ENCODE measurements at regions of chr1 and their contacts with region 1.

Region 1: DNA sequence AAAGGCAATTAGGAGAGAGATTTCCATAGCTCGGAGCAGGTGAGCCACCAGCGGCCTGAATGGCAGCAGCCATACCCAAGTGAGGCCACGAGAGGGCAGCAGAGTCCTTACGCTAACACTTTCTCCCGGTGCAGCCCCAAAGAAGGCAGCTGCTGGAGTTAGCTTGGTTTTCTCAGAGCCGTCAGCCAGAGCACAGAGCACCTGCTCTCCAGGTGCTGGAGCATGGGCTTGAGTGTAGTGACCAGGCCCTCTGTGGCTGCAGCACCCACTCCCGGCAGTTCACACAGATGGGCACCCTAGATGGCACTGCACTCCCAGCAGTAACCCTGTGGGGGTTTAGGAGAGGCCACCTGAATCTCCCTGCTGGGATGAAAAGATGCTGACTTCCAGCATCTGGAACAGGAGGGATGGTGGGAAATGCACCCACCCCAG is 45.8 kb downstream of the TMCC2 start:
- DNase-seq: peak; percentile 88
- H3K4me3 Mint-ChIP-seq: no peak overlapping the region
- H3K27ac Mint-ChIP-seq: no peak overlapping the region
- H3K4me1 Mint-ChIP-seq: peaks cover 25% of the 10 kb centered on the region
- H3K27me3 Mint-ChIP-seq: peaks cover 6% of the 10 kb centered on the region

Region 2: GRCh38 chr1:205255941-205256780 is 17.4 kb before region 1 on chr1:
- CTCF ChIA-PET with region 1: interaction called, 27 read pairs
- POLR2A ChIA-PET with region 1: interaction called, 4 read pairs
- DNase-seq: peak; percentile 87
- H3K4me3 Mint-ChIP-seq: no peak overlapping the region
- H3K27ac Mint-ChIP-seq: no peak overlapping the region
- H3K4me1 Mint-ChIP-seq: no peaks in the 10 kb centered on the region
- H3K27me3 Mint-ChIP-seq: peaks cover 2% of the 10 kb centered on the region

Region 3: DNA sequence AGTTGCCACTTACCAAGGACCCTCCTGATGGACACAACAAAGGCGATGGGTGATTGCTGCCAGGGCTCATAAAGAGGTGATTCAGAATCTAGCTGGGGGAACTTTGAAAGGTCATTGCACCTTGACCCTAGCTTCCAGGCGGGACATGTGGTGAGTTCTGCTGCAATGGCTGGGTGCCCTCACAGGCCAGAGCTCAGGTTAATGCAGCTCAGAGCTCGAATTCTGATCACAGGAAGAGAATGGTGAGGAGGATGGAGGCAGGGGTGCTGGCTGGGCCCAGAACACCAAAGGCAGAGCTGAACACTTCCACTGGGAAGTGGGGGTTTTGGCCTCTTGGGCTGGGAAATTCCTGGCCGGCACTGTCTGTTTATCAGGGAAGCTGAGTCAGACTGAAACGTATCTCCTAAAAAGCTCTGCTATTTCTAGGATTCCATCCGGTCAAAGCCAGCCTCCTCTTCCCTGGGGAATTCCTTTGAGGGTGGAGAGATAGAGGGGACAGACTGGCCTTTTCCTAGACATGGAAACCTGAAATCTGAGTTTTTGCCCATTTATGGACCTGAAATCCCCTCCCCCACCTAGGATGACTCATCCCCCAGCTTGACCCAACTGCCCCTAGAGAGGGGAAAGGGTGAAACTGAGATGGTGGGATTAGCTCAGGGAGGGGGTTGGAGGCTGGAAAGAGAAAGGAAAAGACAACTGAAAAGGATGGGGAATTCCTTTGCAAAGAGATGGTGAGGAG is 20.8 kb after region 1 on chr1:
- CTCF ChIA-PET with region 1: interaction called, 11 read pairs
- POLR2A ChIA-PET with region 1: interaction called, 83 read pairs
- DNase-seq: no peak
- H3K4me3 Mint-ChIP-seq: no peak overlapping the region
- H3K27ac Mint-ChIP-seq: no peak overlapping the region
- H3K4me1 Mint-ChIP-seq: peaks cover 17% of the 10 kb centered on the region
- H3K27me3 Mint-ChIP-seq: peaks cover 9% of the 10 kb centered on the region

Region 4: DNA sequence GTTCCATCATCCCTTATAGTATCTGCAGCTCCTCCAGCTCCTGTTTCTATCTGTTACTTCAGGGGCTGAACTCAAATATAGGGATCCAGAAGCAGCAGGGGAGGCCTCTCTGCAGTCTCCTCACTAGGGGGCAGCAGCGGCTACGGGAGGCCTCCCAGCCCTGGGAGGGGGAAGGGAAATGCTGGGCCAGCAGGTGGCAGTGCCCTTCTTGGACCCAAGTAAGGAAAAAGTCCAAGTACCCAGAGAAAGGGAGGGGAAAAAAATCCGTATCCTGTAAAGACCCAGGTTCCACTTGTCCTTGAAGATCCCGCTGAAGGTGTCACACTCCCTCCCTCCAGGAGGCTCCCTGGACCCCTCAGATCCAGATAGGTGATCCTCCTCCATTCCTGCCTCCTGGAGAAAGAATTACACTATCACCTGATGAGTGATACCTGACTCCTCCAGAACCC is 62.1 kb after region 1 on chr1:
- CTCF ChIA-PET with region 1: interaction called, 724 read pairs
- POLR2A ChIA-PET with region 1: interaction called, 3 read pairs
- DNase-seq: peak; percentile 83
- H3K4me3 Mint-ChIP-seq: no peak overlapping the region
- H3K27ac Mint-ChIP-seq: no peak overlapping the region
- H3K4me1 Mint-ChIP-seq: peaks cover 6% of the 10 kb centered on the region
- H3K27me3 Mint-ChIP-seq: peaks cover 33% of the 10 kb centered on the region

Region 5: DNA sequence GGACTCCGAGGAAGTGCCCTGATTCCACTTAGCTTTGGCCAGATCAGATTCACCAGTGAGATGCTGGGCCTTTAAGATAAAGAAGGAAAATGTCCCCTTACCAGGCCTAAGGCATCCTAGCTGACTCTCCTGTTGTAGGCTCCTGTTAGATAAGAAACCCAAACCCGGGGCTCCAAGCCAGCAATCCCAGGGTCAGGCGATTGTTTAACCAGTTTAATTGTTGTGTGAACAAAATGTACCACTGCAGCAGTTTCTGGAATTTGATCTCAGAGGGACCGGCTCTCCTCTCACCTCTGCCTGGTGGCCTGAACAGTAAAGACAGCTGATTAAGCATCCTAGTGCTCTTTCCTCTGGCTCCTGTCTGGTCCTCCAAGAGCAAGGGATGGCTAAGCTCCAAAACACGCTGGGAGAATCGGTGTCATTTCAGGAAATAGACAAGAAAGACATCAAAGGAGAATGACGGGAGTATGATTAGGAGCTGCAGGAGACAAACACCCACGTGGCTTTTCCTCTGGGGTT is 92.4 kb after region 1 on chr1:
- CTCF ChIA-PET with region 1: no interaction called
- POLR2A ChIA-PET with region 1: no interaction called
- DNase-seq: no peak
- H3K4me3 Mint-ChIP-seq: no peak overlapping the region
- H3K27ac Mint-ChIP-seq: no peak overlapping the region
- H3K4me1 Mint-ChIP-seq: no peaks in the 10 kb centered on the region
- H3K27me3 Mint-ChIP-seq: peaks cover 23% of the 10 kb centered on the region

Region 6: GRCh38 chr1:205523891-205524793 is 250.6 kb after region 1 on chr1:
- CTCF ChIA-PET with region 1: interaction called, 13 read pairs
- POLR2A ChIA-PET with region 1: no interaction called
- DNase-seq: peak; percentile 76
- H3K4me3 Mint-ChIP-seq: no peak overlapping the region
- H3K27ac Mint-ChIP-seq: no peak overlapping the region
- H3K4me1 Mint-ChIP-seq: no peaks in the 10 kb centered on the region
- H3K27me3 Mint-ChIP-seq: no peaks in the 10 kb centered on the region